ENCODE measurements at regions of chr10 and their contacts with region 1.

Region 1: DNA sequence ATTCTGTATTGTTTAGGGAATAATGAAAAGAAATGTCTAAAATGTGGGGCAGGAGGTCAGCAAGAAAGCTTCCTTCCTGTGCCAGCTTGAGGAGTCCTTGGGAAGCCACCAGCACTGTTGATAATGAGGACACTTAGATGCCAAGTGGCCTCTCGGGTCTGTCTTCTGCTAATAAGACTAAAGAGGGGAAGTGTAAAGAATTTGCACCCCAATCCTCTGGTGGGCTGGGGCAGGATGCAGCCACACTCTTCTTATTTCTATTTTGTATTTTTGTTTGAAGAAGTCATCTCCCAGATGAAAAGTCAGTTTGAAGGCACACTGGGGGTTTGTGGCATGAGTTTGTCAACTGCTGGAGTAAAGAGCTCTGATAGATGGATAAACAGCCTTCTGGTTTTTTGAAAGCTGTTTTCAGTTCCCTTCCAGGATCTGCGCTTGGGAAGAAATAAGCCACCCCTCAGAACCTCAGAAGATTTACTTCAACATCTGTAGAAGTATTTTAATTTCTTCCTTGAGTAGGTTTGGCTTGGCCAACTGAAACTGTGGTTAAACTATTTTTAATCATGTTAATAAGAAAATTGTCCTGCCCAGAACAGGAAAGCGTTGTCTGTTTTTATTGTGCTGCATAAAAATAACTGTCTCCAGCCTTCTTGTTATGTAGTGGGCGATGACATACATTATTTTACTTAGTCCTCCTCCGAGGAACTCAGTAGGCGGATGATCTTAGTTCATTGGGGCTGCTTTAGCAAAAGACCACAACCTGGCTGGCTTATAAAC is 128.8 kb upstream of the GPR26 start:
- DNase-seq: peak; percentile 72
- H3K4me3 ChIP-seq: peak overlapping the region; percentile 16
- H3K27ac ChIP-seq: peak overlapping the region; percentile 77
- H3K4me1 ChIP-seq: peaks cover 33% of the 10 kb centered on the region
- CTCF ChIP-seq: no peak

Region 2: DNA sequence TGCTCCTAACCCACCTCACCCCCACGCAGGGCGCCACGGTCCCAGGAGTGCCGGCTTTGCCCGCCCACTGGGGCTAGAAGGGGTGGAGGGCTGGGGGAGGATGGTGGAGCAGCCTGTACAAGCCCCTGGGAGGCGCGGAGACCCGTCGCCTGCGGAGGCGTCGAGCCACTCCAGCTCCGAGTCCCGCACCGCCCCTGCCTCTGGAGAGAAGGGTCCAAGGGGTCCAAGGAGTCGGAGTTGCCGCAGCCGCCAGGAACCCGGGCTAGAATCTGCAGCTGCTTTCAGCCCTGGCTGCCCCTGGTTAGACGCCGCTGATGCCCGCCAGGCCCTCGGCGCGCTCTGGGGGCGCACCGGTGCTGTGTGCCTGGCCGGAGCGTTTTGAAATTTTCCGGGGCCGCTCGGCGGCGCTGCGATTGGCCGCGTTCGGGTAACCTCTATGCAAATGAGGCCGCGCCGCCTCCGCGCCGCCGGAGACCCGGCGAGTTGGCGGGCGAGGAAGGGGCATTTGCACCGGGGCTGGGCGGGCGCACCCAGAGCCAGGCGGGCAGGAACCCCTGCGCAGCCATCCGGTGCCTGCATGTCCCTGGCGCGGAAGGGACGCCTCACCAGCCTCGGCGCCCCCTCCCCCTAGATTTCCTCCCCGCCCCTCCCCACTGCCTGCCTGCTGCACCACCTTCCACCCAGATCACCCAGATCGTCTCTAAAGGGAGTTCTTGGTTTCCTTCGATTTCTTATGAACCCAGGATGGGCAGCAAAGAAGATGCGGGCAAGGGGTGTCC is 389.6 kb before region 1 on chr10 and contains the start of gene HMX2:
- CTCF ChIA-PET with region 1: no interaction called
- POLR2A ChIA-PET with region 1: no interaction called
- intact Hi-C with region 1: loop called (anchors 5 kb)
- DNase-seq: peak; percentile 45
- H3K4me3 ChIP-seq: peak within 1 kb of the TSS; percentile 61
- H3K27ac ChIP-seq: no peak within 1 kb of the TSS
- H3K4me1 ChIP-seq: peaks cover 14% of the 10 kb centered on the region
- CTCF ChIP-seq: peak; percentile 19; the same call in 1 of the 2 replicates
- total RNA-seq, gene HMX2: 1.2 and 2.0 TPM in 2 replicates

Region 3: GRCh38 chr10:124043310-124044142 is 506.2 kb after region 1 on chr10:
- CTCF ChIA-PET with region 1: no interaction called
- POLR2A ChIA-PET with region 1: no interaction called
- intact Hi-C with region 1: no loop called
- DNase-seq: peak; percentile 77
- H3K4me3 ChIP-seq: peak overlapping the region; percentile 18
- H3K27ac ChIP-seq: peak overlapping the region; percentile 63
- H3K4me1 ChIP-seq: peaks cover 19% of the 10 kb centered on the region
- CTCF ChIP-seq: no peak